ENCODE measurements at regions of chr6 and their contacts with region 1.

Region 1: GRCh38 chr6:8879335-8879734 is 444.0 kb upstream of the SLC35B3 start:
- DNase-seq: no peak
- H3K4me3 ChIP-seq: no peak overlapping the region
- H3K27ac ChIP-seq: no peak overlapping the region
- H3K4me1 ChIP-seq: no peaks in the 10 kb centered on the region
- H3K27me3 ChIP-seq: no peaks in the 10 kb centered on the region
- CTCF ChIP-seq: no peak

Region 2: DNA sequence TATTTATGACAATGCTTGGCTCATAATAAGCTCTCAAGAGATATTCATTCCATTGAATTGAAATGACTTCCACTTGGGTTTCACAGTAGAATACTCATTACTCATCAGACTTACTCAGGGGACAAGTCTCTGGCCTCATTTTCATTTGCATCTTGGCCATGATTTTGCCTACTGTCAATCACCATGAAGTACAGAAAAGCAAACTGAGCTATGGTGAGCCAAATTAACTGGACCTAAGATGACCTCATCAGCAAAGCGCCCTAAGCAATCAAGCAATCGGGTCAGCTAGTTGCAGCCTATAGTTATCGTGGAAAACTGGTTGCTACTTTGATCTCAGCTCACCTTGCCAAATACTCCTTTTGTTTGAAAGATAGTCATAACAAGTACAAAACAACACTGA is 50.7 kb after region 1 on chr6:
- intact Hi-C with region 1: loop called (anchors 2 kb)
- DNase-seq: no peak
- H3K4me3 ChIP-seq: no peak overlapping the region
- H3K27ac ChIP-seq: no peak overlapping the region
- H3K4me1 ChIP-seq: no peaks in the 10 kb centered on the region
- H3K27me3 ChIP-seq: no peaks in the 10 kb centered on the region
- CTCF ChIP-seq: no peak

Measured in tibial artery (tissue), 4 donors.